ENCODE measurements at regions of chr14 and their contacts with region 1.

Region 1: DNA sequence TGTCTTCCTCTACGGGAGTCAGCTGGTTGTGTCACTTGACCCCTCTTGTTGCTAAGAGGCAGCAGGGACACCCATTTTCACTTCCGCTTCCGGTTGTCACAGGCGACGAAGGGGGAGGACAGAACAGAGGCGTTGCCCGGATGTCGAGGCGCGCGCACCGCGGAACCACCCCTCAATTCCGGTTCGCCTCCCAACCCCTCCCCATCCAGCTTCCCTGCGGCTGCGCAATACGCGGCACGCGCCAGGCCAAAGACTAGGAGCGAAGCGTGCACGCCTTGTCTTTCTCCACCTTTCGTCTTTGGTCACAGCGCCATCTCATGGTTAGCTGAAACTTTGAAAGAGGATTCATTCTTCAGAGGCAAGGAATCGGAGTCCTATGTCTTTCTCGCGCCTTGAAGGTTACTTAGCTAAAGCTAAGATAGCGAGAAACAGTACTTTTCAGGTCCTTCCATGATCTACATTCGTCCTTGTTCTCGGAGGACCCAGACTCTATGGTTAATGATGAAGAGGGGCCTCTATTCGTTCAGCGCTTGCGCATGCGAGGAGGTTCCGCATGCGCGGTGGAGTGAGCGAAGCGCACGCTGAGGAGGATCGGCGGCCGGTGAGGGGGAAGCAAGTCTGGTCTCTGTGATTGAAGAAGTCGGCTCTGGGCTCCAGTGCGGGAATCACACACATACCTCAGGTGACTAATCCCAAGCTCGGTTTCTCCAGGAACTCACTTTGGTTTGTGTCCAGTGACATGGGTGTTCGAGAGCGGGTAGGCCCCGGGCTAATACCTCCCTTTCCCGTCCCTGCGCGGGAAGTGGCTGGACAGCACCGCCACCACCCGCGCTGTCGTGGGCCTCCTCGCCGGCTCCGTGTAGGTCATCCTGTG is at the starts of genes ATP6V1D and EIF2S1:
- DNase-seq: peak; percentile 99
- H3K4me3 ChIP-seq: peak within 1 kb of the TSS; percentile 93
- H3K27ac ChIP-seq: peak within 1 kb of the TSS; percentile 76
- H3K4me1 ChIP-seq: peaks cover 39% of the 10 kb centered on the region
- CTCF ChIP-seq: peak; percentile 100
- total RNA-seq, gene ATP6V1D: 31.4 and 39.0 TPM in 2 replicates
- total RNA-seq, gene EIF2S1: 170 and 222 TPM in 2 replicates

Region 2: DNA sequence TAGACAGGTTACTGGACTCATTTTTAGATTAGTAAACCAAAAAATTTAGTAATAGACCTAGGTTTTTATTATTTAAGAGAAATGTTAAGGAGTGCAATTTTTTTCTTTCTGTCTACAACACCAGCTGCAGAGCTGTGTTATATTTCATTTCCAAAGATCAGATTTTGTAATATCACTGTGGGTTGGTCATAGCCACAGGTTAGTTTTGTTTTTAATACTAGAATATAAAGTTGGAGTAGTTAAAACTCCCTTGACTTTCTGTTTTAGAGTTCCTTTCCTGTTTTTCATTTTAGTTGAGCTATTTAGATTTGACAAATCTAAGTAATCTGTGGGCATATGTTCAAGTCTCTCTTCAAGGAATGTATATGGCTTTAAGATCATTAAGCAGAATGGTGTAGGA is 201.4 kb before region 1 on chr14:
- CTCF ChIA-PET with region 1: no interaction called
- POLR2A ChIA-PET with region 1: no interaction called
- intact Hi-C with region 1: no loop called
- DNase-seq: no peak
- H3K4me3 ChIP-seq: no peak overlapping the region
- H3K27ac ChIP-seq: no peak overlapping the region
- H3K4me1 ChIP-seq: no peaks in the 10 kb centered on the region
- CTCF ChIP-seq: no peak

Region 3: DNA sequence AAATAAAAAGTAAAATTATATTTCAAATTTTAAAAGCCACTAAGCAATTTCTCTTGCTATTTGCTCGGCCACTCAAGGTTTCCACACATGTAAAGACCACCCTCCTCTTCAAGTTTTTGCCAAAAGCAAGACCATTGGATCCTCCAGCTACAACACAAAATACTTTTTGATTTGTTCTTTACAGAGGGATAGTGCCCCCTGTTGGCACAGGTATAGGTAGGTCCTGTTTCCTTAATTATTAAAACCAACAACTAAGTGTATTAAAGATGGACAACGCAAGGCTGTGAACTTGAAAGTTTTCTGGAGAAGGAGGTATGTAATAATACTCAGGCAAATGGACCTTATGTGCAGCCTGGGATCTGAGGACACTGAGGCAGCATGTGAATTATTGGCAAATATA is 24.2 kb before region 1 on chr14:
- CTCF ChIA-PET with region 1: no interaction called
- POLR2A ChIA-PET with region 1: no interaction called
- intact Hi-C with region 1: no loop called
- DNase-seq: peak; percentile 34
- H3K4me3 ChIP-seq: no peak overlapping the region
- H3K27ac ChIP-seq: no peak overlapping the region
- H3K4me1 ChIP-seq: no peaks in the 10 kb centered on the region
- CTCF ChIP-seq: peak; percentile 76

Region 4: GRCh38 chr14:67387195-67387594 is 27.2 kb after region 1 on chr14:
- CTCF ChIA-PET with region 1: no interaction called
- POLR2A ChIA-PET with region 1: interaction called, 13 read pairs
- intact Hi-C with region 1: no loop called
- DNase-seq: no peak
- H3K4me3 ChIP-seq: no peak overlapping the region
- H3K27ac ChIP-seq: no peak overlapping the region
- H3K4me1 ChIP-seq: no peaks in the 10 kb centered on the region
- CTCF ChIP-seq: no peak

Region 5: DNA sequence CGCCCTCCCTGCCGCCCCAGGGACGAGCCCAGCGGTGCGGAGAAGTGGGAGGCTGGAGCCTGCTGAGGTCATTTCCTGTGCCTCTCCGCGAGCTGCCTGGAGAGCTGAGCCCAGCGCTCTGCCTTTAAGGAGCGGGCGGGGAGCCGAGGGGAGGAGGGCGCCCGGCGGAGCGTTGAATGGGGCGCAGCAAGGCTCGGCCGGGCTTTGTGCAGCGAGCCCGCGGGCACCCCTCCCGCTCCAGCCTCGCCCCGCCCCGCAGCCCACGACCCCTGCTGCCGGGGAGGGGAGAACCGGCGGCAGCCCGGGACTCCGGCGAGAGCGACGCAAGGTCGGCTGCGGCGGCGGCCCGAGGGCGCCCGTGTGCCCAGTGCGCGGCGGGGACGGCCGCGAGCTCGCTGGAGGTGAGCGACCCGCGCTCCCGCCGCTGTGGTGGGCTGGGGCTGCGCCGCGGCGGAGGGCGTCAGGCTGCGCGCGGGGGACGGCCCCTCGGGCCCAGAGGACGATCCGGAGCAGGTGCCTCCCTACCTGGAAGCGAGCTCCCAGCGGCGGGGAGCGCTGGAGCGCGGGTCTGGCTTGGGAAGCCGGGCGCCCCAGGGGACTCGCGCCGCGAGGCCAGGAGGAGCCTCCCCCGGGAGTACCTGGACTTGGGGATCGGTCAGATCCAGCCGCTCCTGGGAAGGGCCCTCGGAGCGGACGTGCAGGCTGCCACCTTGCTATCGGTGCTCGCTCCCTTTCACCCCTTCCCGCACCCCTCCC is 173.2 kb after region 1 on chr14 and contains the start of gene PLEKHH1:
- CTCF ChIA-PET with region 1: no interaction called
- POLR2A ChIA-PET with region 1: no interaction called
- intact Hi-C with region 1: no loop called
- DNase-seq: no peak
- H3K4me3 ChIP-seq: peak within 1 kb of the TSS; percentile 25
- H3K27ac ChIP-seq: no peak within 1 kb of the TSS
- H3K4me1 ChIP-seq: no peaks in the 10 kb centered on the region
- CTCF ChIP-seq: no peak
- total RNA-seq, gene PLEKHH1: not detected in 2 replicates

Region 6: GRCh38 chr14:67919259-67920032 is 559.4 kb after region 1 on chr14:
- CTCF ChIA-PET with region 1: no interaction called
- POLR2A ChIA-PET with region 1: no interaction called
- intact Hi-C with region 1: no loop called
- DNase-seq: no peak
- H3K4me3 ChIP-seq: no peak overlapping the region
- H3K27ac ChIP-seq: no peak overlapping the region
- H3K4me1 ChIP-seq: no peaks in the 10 kb centered on the region
- CTCF ChIP-seq: no peak

Measured in OCI-LY7 (cell line).